A673 (cell line): ENCODE measurements at regions of chr5 and their contacts with region 1.

Region 1: GRCh38 chr5:78008356-78008967 is 232.3 kb upstream of the TBCA start:
- DNase-seq: peak; percentile 34
- H3K4me3 ChIP-seq: no peak overlapping the region
- H3K27ac ChIP-seq: no peak overlapping the region
- H3K4me1 ChIP-seq: no peaks in the 10 kb centered on the region
- H3K27me3 ChIP-seq: no peaks in the 10 kb centered on the region
- CTCF ChIP-seq: peak; percentile 74

Region 2: DNA sequence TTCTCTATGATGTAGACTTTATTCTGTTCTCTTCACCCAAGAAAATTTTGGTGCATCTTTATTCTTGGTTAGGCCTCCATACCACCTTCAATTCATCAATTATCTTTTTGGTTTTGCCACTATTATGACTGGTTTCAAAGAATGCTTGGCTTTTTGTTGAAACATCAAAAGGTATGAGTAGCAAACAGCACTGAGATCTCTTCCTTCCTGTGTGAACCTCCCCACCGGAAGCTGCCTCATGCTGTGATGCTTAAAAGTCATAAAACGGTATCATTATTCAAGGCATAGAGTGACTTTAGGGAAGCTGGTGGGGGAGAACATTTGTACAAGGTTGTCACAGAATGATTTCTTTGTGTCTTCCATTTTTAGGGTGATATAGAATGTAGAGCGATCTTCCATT is 1534.8 kb before region 1 on chr5:
- CTCF ChIA-PET with region 1: no interaction called
- POLR2A ChIA-PET with region 1: no interaction called
- intact Hi-C with region 1: no loop called
- DNase-seq: peak; percentile 95
- H3K4me3 ChIP-seq: no peak overlapping the region
- H3K27ac ChIP-seq: peak overlapping the region; percentile 38
- H3K4me1 ChIP-seq: peaks cover 17% of the 10 kb centered on the region
- H3K27me3 ChIP-seq: no peaks in the 10 kb centered on the region
- CTCF ChIP-seq: no peak

Region 3: DNA sequence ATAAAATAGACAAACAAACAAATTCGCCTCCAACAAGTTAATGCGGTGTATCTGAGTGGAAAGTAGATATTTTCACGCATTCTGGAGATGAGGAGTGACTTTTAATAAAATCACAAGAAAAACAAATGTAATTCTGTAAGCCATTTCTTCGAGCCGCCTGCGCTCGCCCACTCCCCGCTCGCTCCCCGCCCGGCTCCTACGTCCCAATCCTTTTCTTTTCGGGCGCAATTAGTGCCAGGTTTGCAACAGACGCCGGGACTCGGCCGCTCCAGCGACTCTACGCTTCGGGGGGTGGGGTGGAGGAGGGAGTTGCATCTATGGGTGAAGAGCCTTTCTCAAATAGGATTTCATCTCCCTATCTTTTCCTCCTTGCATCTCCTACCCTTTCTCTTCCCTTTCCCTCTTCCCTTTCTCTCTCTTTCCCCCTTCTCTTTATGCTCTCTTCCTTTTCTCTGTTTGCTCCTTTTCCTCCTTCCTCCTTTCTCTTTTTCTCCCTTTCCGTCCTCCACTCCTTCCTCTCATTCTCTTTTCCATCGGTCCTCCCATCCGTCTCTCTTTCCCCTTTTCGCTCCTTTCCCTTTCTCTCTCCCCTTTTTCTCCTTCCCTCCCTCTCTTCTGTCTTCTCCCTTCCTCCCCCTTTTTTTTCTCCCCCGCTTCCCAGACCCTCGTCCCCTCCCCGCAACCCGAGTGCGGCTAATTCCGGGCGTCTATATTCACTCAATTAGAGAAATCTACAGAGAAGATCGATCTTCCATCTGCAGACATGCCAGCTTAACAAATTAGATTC is 363.9 kb before region 1 on chr5:
- CTCF ChIA-PET with region 1: no interaction called
- POLR2A ChIA-PET with region 1: no interaction called
- intact Hi-C with region 1: loop called (anchors 1 kb)
- DNase-seq: no peak
- H3K4me3 ChIP-seq: no peak overlapping the region
- H3K27ac ChIP-seq: no peak overlapping the region
- H3K4me1 ChIP-seq: no peaks in the 10 kb centered on the region
- H3K27me3 ChIP-seq: peaks cover 99% of the 10 kb centered on the region
- CTCF ChIP-seq: no peak

Region 4: GRCh38 chr5:77816671-77817070 is 191.8 kb before region 1 on chr5:
- CTCF ChIA-PET with region 1: no interaction called
- POLR2A ChIA-PET with region 1: no interaction called
- intact Hi-C with region 1: no loop called
- DNase-seq: no peak
- H3K4me3 ChIP-seq: no peak overlapping the region
- H3K27ac ChIP-seq: no peak overlapping the region
- H3K4me1 ChIP-seq: no peaks in the 10 kb centered on the region
- H3K27me3 ChIP-seq: no peaks in the 10 kb centered on the region
- CTCF ChIP-seq: no peak